ENCODE measurements at regions of chr11 and their contacts with region 1.

Region 1: DNA sequence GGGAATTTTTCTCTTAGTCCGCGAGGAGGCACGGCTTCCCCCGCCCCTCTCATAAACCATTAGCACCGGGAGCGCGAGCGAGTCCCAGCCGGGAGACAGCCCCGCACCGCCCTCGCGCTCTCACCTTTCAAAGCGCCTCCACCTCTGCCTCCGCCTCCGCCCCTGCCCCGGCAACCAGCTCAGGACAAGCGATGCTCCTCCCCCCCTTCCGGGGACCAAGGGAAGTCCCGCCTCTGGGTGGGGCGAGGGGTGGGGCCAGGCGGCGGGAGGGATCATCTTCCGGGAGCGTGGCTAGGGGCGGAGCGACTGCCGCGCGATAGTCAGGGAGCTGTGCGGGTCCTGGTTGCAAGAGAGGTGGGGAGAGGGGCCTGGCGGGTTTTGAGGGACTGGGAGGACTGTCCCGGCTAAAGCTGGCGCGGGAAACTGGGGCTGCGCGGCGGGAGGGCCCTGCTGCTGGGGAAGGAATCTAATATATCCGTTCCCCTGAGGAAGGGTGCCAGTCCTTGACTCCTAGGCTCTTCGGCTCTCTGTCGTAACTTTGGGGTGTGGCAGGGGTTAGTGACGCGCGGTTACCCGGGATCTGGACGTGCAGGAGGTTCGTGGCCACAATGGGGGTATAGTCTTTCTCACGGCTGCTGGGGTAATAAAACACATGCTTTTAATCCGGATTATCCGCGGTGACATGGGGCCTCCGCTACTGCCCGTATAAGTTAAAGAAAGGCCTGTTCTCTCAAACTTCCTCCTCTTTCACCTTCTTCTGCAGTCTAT is at the starts of genes CCDC82 and JRKL:
- DNase-seq: peak; percentile 96 to 99 (median 98)
- ATAC-seq: peak; percentile 97
- H3K4me3 ChIP-seq: peak within 1 kb of the TSS; percentile 87 to 93
- H3K4me3 Mint-ChIP-seq: peak within 1 kb of the TSS; percentile 94
- H3K27ac ChIP-seq: peak within 1 kb of the TSS; percentile 78 to 79
- H3K27ac Mint-ChIP-seq: peak within 1 kb of the TSS; percentile 96
- H3K4me1 ChIP-seq: peaks cover 15% of the 10 kb centered on the region
- H3K4me1 Mint-ChIP-seq: peaks cover 52% of the 10 kb centered on the region
- H3K27me3 ChIP-seq: no peaks in the 10 kb centered on the region
- H3K27me3 Mint-ChIP-seq: no peaks in the 10 kb centered on the region
- CTCF ChIP-seq: no peak
- total RNA-seq, gene CCDC82: 20.0 to 23.0 TPM
- total RNA-seq, gene JRKL: 2.5 to 2.6 TPM

Region 2: DNA sequence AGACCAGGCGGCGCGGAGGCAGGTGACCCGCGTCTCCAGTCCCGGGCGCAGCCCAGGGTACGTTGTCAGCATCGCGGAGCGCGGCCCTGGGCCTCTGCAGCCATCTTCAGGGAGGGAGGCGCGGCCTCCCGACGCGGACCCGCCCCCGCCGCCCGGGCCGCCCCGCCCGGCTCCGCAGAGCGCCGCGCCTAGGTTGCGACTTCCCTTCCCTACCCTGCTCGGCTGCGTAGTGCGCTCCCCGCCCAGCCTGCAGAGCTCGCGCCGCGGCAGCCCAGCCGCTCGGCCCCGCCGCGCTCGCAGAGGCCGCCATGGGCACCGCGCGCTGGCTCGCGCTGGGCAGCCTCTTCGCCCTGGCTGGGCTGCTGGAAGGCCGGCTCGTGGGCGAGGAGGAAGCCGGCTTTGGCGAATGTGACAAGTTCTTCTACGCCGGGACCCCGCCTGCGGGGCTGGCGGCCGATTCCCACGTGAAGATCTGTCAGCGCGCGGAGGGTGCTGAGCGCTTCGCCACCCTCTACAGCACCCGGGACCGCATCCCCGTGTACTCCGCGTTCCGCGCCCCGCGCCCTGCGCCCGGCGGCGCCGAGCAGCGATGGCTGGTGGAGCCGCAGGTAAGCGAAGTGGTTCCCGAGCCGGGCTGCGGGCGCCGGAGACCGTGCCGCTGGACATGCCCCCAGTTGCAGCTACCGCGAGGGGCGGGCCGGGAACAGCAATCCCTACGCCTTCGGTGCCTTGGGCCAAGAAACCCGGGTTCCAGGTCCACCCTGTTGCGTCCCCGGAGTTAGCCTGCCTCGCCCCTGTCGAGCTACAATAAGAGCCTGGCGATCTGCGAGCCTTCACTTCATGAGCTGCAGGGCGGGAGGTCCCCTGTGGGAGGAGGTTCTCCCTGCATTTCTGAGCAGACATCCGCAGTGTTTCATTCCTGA is 1300.0 kb before region 1 on chr11 and contains the start of gene ENDOD1:
- CTCF ChIA-PET with region 1: no interaction called
- POLR2A ChIA-PET with region 1: no interaction called
- intact Hi-C with region 1: loop called in 1 of 2 experiments (anchors 5 kb)
- DNase-seq: peak; percentile 75 to 92 (median 83)
- ATAC-seq: peak; percentile 94
- H3K4me3 ChIP-seq: peak within 1 kb of the TSS; percentile 66 to 78
- H3K4me3 Mint-ChIP-seq: peak within 1 kb of the TSS; percentile 93
- H3K27ac ChIP-seq: peak within 1 kb of the TSS; percentile 77 to 84
- H3K27ac Mint-ChIP-seq: peak within 1 kb of the TSS; percentile 99
- H3K4me1 ChIP-seq: peaks cover 25% of the 10 kb centered on the region
- H3K4me1 Mint-ChIP-seq: peaks cover 50% of the 10 kb centered on the region
- H3K27me3 ChIP-seq: no peaks in the 10 kb centered on the region
- H3K27me3 Mint-ChIP-seq: no peaks in the 10 kb centered on the region
- CTCF ChIP-seq: no peak
- total RNA-seq, gene ENDOD1: 5.6 to 5.9 TPM

Region 3: DNA sequence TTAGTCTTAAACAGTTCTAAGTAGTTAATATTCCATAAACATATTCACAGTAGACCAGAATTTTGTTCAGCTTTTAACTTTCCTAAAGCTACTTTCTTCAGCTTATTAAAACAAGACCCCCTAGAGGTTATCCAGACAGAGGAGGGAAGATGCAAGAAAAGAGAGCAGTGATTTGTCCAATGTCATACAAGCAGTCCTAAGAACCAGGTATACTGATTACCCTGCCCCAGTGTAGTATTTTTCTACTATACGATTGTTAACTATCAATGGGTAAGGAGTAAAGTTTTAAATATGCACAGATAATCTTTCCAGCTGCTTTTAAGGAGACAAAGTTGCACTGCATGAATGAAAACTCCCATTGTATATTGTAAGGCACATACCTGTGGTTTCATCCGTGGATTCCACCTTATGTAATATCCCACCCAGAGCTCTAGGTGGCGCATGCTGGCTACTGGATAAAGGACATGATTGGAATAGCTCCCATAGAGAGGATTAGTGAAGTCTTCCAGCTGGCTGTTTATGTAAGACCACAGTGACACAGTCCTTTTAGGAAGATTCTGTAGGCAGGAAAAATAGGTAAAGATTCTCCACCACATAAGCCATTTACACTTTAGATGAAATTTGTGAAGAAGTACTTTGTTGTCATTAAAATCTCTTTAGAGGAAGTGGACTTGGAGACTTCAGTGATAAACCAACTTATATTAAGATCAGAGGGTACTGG is 554.0 kb before region 1 on chr11:
- CTCF ChIA-PET with region 1: interaction called, 29 read pairs
- POLR2A ChIA-PET with region 1: no interaction called
- intact Hi-C with region 1: loop called (anchors 1 kb)
- DNase-seq: peak; percentile 8 to 70 (median 55)
- ATAC-seq: peak; percentile 93
- H3K4me3 ChIP-seq: no peak overlapping the region
- H3K4me3 Mint-ChIP-seq: no peak overlapping the region
- H3K27ac ChIP-seq: no peak overlapping the region
- H3K27ac Mint-ChIP-seq: no peak overlapping the region
- H3K4me1 ChIP-seq: no peaks in the 10 kb centered on the region
- H3K4me1 Mint-ChIP-seq: no peaks in the 10 kb centered on the region
- H3K27me3 ChIP-seq: no peaks in the 10 kb centered on the region
- H3K27me3 Mint-ChIP-seq: no peaks in the 10 kb centered on the region
- CTCF ChIP-seq: peak; percentile 86

Region 4: GRCh38 chr11:95923728-95924413 is 466.0 kb before region 1 on chr11 and contains the start of gene MTMR2:
- CTCF ChIA-PET with region 1: no interaction called
- POLR2A ChIA-PET with region 1: no interaction called
- intact Hi-C with region 1: loop called in 1 of 2 experiments (anchors 2 kb)
- DNase-seq: peak; percentile 10 to 77 (median 39)
- ATAC-seq: peak; percentile 66
- H3K4me3 ChIP-seq: peak within 1 kb of the TSS; percentile 87 to 94
- H3K4me3 Mint-ChIP-seq: peak within 1 kb of the TSS; percentile 89
- H3K27ac ChIP-seq: peak within 1 kb of the TSS; percentile 62 to 88
- H3K27ac Mint-ChIP-seq: peak within 1 kb of the TSS; percentile 81
- H3K4me1 ChIP-seq: peaks cover 3% of the 10 kb centered on the region
- H3K4me1 Mint-ChIP-seq: peaks cover 35% of the 10 kb centered on the region
- H3K27me3 ChIP-seq: no peaks in the 10 kb centered on the region
- H3K27me3 Mint-ChIP-seq: peaks cover 3% of the 10 kb centered on the region
- CTCF ChIP-seq: no peak
- total RNA-seq, gene MTMR2: 11.2 to 12.9 TPM

Region 5: GRCh38 chr11:96091476-96091875 is 298.4 kb before region 1 on chr11:
- CTCF ChIA-PET with region 1: interaction called, 6 read pairs
- POLR2A ChIA-PET with region 1: no interaction called
- intact Hi-C with region 1: loop called (anchors 1 to 5 kb)
- DNase-seq: peak in 4 of 9 experiments; percentile 14 to 66 (median 42)
- ATAC-seq: peak; percentile 97
- H3K4me3 ChIP-seq: no peak overlapping the region
- H3K4me3 Mint-ChIP-seq: no peak overlapping the region
- H3K27ac ChIP-seq: no peak overlapping the region
- H3K27ac Mint-ChIP-seq: peak overlapping the region; percentile 90
- H3K4me1 ChIP-seq: peaks cover 24% of the 10 kb centered on the region
- H3K4me1 Mint-ChIP-seq: peaks cover 81% of the 10 kb centered on the region
- H3K27me3 ChIP-seq: no peaks in the 10 kb centered on the region
- H3K27me3 Mint-ChIP-seq: no peaks in the 10 kb centered on the region
- CTCF ChIP-seq: peak; percentile 41

Region 6: DNA sequence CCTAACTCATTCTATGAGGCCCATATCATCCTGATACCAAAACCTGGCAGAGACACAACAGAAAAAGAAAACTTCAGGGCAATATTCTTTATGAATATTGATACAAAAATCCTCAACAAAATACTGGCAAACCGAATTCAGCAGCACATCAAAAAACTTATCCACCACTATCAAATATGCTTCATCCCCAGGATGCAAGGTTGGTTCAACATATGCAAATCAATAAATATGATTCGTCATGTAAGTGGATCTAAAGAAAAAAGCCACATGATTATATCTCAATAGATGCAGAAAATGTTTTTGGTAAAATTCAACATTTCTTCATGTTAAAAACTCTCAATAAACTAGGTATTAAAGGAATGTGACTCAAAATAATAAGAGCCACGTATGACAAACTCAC is 40.8 kb after region 1 on chr11:
- CTCF ChIA-PET with region 1: no interaction called
- POLR2A ChIA-PET with region 1: no interaction called
- intact Hi-C with region 1: no loop called
- DNase-seq: no peak
- ATAC-seq: no peak
- H3K4me3 ChIP-seq: no peak overlapping the region
- H3K4me3 Mint-ChIP-seq: no peak overlapping the region
- H3K27ac ChIP-seq: no peak overlapping the region
- H3K27ac Mint-ChIP-seq: no peak overlapping the region
- H3K4me1 ChIP-seq: no peaks in the 10 kb centered on the region
- H3K4me1 Mint-ChIP-seq: no peaks in the 10 kb centered on the region
- H3K27me3 ChIP-seq: no peaks in the 10 kb centered on the region
- H3K27me3 Mint-ChIP-seq: peaks cover 40% of the 10 kb centered on the region
- CTCF ChIP-seq: no peak

Measured in CD8-positive, alpha-beta T cell (primary cell).